IMR-90 (cell line): ENCODE measurements at regions of chr6 and their contacts with region 1.

Region 1: DNA sequence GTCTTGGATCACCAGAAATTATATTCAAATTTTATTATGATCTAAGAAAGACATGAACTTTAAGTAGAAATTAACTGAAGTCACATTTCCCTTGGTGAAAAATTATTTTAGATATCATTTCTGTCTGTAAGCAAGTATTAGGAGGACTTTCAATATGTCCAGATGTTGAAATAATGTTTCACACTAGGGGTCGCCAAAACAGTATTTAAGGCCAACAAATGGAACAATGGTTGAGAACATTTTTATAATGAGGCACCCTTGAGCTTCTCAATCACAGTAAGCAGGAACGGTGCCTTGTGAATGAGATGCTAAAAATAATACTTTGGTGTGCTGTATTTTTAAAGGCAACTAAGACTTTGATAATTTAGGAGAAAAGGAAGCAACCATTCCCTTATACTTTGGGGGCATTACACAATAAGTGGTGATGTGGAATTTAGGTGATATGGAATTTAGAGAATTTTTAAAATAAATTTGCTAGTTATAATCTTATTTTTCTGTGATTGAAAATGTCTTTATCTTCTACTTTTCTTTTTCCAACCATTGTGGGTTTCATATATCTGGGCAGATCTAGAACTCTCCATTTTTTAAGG is 9.6 kb upstream of the SF3B5 start:
- DNase-seq: peak; percentile 79
- ATAC-seq: peak; percentile 77
- H3K4me3 ChIP-seq: no peak overlapping the region
- H3K27ac ChIP-seq: no peak overlapping the region
- H3K4me1 ChIP-seq: no peaks in the 10 kb centered on the region
- H3K27me3 ChIP-seq: peaks cover 3% of the 10 kb centered on the region
- CTCF ChIP-seq: peak; percentile 86
- POLR2A ChIP-seq: no peak
- RAD21 ChIP-seq: peak; percentile 91

Region 2: DNA sequence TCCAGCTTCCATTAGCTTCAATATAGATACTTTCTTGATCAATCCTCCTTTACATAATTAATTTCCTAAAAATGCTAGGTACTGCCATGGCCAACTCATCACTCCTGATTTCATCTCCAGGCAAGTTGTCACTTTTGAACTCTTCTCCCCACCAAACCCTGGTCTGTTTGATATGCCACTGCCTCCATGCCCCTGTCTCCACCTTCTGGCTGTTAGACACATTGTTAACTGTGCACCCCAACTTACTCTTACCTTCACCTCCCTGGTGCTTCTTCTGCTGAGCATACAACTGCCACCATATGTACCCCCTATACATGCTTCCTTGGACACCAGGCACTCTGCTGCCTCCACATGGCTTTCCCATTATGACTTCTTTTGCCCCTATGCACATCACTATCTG is 1066.2 kb before region 1 on chr6:
- CTCF ChIA-PET with region 1: no interaction called
- POLR2A ChIA-PET with region 1: no interaction called
- dilution Hi-C with region 1: no loop called
- in situ Hi-C with region 1: no loop called
- intact Hi-C with region 1: no loop called
- DNase-seq: no peak
- ATAC-seq: no peak
- H3K4me3 ChIP-seq: no peak overlapping the region
- H3K27ac ChIP-seq: no peak overlapping the region
- H3K4me1 ChIP-seq: no peaks in the 10 kb centered on the region
- H3K27me3 ChIP-seq: peaks cover 5% of the 10 kb centered on the region; the same call in 1 of the 2 replicates
- CTCF ChIP-seq: no peak
- POLR2A ChIP-seq: no peak
- RAD21 ChIP-seq: no peak

Region 3: DNA sequence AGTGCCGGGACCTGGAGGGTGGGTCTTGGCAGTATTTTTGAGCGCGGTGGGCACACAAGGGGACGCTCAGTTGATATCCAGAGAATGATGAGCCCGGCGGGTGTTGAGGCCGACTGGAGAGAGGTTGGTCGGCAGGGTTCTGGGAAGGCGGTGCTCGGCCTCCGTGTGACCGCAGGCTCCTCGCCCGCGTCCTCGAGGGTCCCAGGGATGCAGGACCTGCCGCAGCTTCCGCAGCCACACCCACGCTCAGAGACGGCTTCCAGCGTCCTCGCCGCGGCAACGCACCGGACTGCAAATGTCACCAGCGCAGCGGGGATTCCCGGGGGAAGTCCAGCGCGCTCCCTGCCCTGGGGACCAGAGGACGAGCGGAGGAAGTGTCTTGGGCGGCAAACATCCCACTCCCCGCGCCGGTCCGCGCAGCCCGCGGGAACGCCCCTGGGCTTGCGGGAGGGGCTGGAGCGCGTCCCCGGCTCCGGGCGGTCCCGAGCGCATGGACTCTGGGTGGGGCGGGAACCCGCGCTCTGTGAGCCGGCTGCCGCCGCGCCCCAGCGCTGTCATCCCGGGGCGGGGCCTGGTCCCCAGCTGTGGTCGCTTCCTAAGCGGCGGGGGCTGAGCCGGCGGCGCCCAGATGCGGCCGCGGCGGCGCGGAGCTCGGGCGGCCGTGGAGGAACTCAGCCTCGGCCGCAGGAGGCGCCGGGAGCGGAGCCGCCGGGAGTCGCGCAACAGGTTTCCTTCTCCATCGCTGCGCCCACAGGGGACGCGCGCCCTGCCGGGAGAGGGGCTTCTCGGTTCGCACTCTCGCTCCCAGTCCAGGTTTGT is 45.1 kb after region 1 on chr6 and contains the start of gene STX11:
- CTCF ChIA-PET with region 1: no interaction called
- POLR2A ChIA-PET with region 1: no interaction called
- dilution Hi-C with region 1: no loop called
- in situ Hi-C with region 1: no loop called
- intact Hi-C with region 1: loop called (anchors 5 kb)
- DNase-seq: peak; percentile 29
- ATAC-seq: peak; percentile 92
- H3K4me3 ChIP-seq: peak within 1 kb of the TSS; percentile 84
- H3K27ac ChIP-seq: no peak within 1 kb of the TSS; the same call in 1 of the 2 replicates
- H3K4me1 ChIP-seq: peaks cover 3% of the 10 kb centered on the region; the same call in 1 of the 2 replicates
- H3K27me3 ChIP-seq: peaks cover 13% of the 10 kb centered on the region
- CTCF ChIP-seq: no peak
- POLR2A ChIP-seq: no peak
- RAD21 ChIP-seq: no peak
- total RNA-seq, gene STX11: 0.54 and 0.56 TPM in 2 replicates

Region 4: DNA sequence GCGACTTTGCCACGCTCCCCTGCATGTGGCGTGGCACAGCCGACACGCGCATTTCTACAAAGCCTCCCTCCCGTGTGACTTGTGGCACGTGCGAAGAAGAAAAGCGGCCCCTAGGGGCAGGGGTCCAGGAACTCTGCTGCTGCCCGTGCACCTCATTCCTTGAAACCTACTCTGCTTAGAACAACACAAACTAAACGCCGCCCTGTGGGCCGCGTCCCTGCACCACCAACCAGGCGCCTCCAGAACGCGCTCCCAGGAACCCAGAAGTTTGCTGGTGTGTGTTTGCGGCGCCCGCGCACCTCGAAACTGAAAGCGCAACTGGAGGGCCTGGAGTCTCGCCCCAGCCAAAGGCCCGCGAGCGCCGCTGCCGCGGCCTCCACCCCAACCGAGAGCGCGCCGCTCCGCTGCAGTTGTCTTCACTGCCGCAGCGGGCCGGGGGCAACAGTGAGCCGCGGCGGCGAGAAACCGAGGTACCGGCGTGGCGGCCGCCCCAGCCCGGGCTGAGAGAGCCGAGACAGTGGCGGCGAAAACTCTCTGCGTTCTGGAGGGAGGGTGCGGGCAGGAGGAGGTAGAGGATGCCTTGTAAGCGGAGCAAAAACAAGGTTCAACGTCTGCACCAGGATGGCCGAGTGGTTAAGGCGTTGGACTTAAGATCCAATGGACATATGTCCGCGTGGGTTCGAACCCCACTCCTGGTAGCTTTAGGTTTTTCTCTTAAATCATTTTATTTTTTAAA is 111.1 kb after region 1 on chr6:
- CTCF ChIA-PET with region 1: interaction called, 4 read pairs
- POLR2A ChIA-PET with region 1: no interaction called
- dilution Hi-C with region 1: no loop called
- in situ Hi-C with region 1: no loop called
- intact Hi-C with region 1: loop called (anchors 1 kb)
- DNase-seq: peak; percentile 98
- ATAC-seq: peak; percentile 89
- H3K4me3 ChIP-seq: peak overlapping the region; percentile 58
- H3K27ac ChIP-seq: peak overlapping the region; percentile 72
- H3K4me1 ChIP-seq: peaks cover 8% of the 10 kb centered on the region
- H3K27me3 ChIP-seq: no peaks in the 10 kb centered on the region
- CTCF ChIP-seq: peak; percentile 83
- POLR2A ChIP-seq: 0 out of 2 replicates have a peak, but pooled peaks have one; percentile 33
- RAD21 ChIP-seq: peak; percentile 81

Region 5: DNA sequence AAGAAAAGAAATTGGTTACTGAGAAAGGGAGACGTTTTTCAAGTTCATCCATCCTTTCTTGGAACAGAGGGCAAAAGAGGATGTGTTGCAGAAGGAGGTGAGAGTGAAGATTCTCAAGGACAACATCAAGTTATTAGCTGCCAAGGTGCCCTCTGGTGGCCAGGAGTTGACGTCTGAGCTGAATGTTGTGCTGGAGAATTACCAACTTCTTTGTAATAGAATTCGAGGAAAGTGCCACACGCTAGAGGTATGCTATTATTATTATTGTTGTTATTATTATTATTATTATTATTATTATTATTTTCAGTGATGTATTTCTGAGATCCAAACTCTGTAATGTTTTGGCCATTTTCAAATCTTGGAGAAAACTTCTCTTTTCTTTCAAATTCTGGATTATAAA is 377.1 kb after region 1 on chr6:
- CTCF ChIA-PET with region 1: no interaction called
- POLR2A ChIA-PET with region 1: no interaction called
- dilution Hi-C with region 1: no loop called
- in situ Hi-C with region 1: loop called (anchors 5 kb)
- intact Hi-C with region 1: loop called (anchors 1 kb)
- DNase-seq: peak; percentile 81
- ATAC-seq: peak; percentile 62
- H3K4me3 ChIP-seq: no peak overlapping the region
- H3K27ac ChIP-seq: no peak overlapping the region
- H3K4me1 ChIP-seq: peaks cover 4% of the 10 kb centered on the region
- H3K27me3 ChIP-seq: no peaks in the 10 kb centered on the region
- CTCF ChIP-seq: peak; percentile 69
- POLR2A ChIP-seq: no peak
- RAD21 ChIP-seq: peak; percentile 74

Region 6: DNA sequence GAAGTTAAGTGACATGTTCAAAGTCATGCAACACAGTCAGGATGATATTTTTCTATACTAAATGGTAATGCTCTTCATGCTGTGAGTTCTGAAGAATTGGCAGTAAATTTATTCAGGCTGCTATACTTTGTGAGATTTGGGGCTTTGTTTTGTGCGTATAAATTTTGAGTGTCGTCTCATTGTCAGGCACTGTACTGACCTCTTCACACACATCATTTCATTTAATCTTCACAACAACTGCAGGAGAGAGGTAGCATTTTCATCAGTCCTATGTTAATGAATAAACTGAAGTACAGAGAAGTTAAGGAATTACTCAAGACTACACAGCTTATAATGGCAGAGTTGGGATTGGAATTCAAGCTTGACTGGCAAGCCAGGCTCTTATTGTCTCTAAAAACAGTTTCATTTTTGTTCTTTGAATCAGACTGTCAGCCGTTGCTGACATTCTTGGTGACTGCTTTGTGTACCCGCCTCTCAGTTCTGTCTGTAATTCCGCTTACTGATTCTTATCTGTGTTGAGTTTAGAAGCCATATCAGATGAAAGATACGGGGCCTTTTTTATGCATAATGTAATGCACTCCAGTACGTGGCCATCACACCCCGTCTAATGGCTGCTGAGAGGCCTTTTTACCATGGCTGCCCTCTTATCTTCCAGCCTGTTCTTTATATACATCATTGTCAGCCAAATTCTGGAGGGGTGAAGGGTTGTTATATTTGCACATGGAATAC is 455.0 kb after region 1 on chr6:
- CTCF ChIA-PET with region 1: no interaction called
- POLR2A ChIA-PET with region 1: no interaction called
- dilution Hi-C with region 1: no loop called
- in situ Hi-C with region 1: no loop called
- intact Hi-C with region 1: loop called (anchors 10 kb)
- DNase-seq: peak; percentile 38
- ATAC-seq: peak; percentile 80
- H3K4me3 ChIP-seq: no peak overlapping the region
- H3K27ac ChIP-seq: no peak overlapping the region
- H3K4me1 ChIP-seq: no peaks in the 10 kb centered on the region
- H3K27me3 ChIP-seq: no peaks in the 10 kb centered on the region
- CTCF ChIP-seq: no peak
- POLR2A ChIP-seq: no peak
- RAD21 ChIP-seq: no peak

Region 7: GRCh38 chr6:145067430-145067829 is 962.4 kb after region 1 on chr6:
- CTCF ChIA-PET with region 1: no interaction called
- POLR2A ChIA-PET with region 1: no interaction called
- dilution Hi-C with region 1: no loop called
- in situ Hi-C with region 1: no loop called
- intact Hi-C with region 1: no loop called
- DNase-seq: peak; percentile 57
- ATAC-seq: no peak
- H3K4me3 ChIP-seq: no peak overlapping the region
- H3K27ac ChIP-seq: no peak overlapping the region
- H3K4me1 ChIP-seq: peaks cover 16% of the 10 kb centered on the region
- H3K27me3 ChIP-seq: no peaks in the 10 kb centered on the region
- CTCF ChIP-seq: no peak
- POLR2A ChIP-seq: no peak
- RAD21 ChIP-seq: no peak